ENCODE measurements at regions of chr3 and their contacts with region 1.

Region 1: GRCh38 chr3:56753206-56753820 is 48.4 kb downstream of the ARHGEF3 start:
- DNase-seq: no peak
- H3K4me3 ChIP-seq: no peak overlapping the region
- H3K27ac ChIP-seq: no peak overlapping the region
- H3K4me1 ChIP-seq: peaks cover 33% of the 10 kb centered on the region
- CTCF ChIP-seq: no peak

Region 2: DNA sequence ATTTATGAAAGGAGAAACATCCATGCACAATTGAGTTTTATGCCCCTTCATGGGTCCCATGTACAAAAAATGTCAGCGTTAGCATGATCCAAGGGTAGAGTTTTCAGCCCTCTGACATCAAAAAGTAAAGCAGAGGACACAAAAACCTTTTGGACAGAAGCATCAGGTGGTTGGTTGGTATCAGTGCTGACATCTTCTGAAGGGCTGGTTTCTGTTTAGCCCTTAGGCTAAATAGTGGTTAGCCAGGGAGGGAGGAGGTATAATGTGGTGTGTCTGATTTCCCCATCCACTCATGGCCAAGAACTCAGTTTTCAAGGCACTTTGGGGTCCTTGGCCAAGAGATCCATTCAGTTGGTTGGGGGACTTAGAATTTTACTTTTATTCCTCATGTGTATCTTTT is 179.8 kb before region 1 on chr3:
- CTCF ChIA-PET with region 1: no interaction called
- POLR2A ChIA-PET with region 1: no interaction called
- intact Hi-C with region 1: no loop called
- DNase-seq: no peak
- H3K4me3 ChIP-seq: no peak overlapping the region
- H3K27ac ChIP-seq: no peak overlapping the region
- H3K4me1 ChIP-seq: no peaks in the 10 kb centered on the region
- CTCF ChIP-seq: no peak

Region 3: DNA sequence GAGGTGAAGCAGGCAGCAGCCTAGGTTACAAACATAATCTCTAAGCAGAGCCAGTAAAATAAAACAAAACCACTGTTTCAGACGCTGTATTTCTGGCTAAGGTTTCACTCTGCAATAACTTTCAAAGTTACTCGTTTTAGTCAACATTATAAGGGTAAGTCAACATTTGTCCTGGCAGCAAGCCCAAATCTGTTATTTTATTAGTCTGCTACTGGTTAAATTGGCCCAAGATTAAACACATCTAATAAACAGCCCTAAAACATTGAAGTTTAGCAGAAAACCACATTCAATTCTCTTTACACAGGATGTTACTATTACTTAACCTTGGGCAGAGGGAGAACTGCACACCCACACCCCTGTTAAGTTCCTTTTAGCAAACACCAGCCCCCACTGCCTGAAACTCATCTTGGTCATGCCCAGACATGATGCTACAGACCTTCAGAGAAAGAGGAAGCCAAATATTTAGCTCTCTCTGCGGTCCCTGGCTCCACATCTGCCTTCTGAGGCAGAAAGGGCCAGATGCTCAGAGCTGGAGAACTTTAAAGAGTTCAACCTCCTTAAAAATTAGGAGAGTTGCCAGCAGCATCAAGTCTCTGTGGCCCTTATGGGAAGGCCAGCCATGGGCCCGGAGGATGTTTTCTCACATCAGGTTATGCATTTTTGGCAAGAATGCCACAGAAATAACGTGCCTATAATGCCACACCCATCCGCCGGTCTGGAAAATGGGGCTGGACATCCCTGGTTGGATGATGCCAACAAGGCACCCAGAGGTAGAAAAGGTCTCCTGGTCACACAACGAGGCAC is 30.5 kb after region 1 on chr3:
- CTCF ChIA-PET with region 1: no interaction called
- POLR2A ChIA-PET with region 1: interaction called, 13 read pairs
- intact Hi-C with region 1: loop called (anchors 2 kb)
- DNase-seq: peak; percentile 89
- H3K4me3 ChIP-seq: peak overlapping the region; percentile 30
- H3K27ac ChIP-seq: peak overlapping the region; percentile 52
- H3K4me1 ChIP-seq: peaks cover 60% of the 10 kb centered on the region
- CTCF ChIP-seq: no peak